ENCODE measurements at regions of chr11 and their contacts with region 1.

Region 1: GRCh38 chr11:65150509-65151271 is 16.4 kb upstream of the SYVN1 start:
- DNase-seq: peak; percentile 99 to 100
- H3K4me3 ChIP-seq: peak overlapping the region; percentile 18; the same call in 1 of the 2 replicates
- H3K27ac ChIP-seq: peak overlapping the region; percentile 88
- H3K4me1 ChIP-seq: peaks cover 40% of the 10 kb centered on the region
- H3K27me3 ChIP-seq: no peaks in the 10 kb centered on the region
- CTCF ChIP-seq: no peak; the same call in 1 of the 2 replicates

Region 2: GRCh38 chr11:64971421-64972233 is 179.1 kb before region 1 on chr11 and contains the start of gene MAJIN:
- CTCF ChIA-PET with region 1: interaction called, 12 read pairs
- POLR2A ChIA-PET with region 1: interaction called, 13 read pairs
- intact Hi-C with region 1: no loop called
- DNase-seq: peak; percentile 66 to 93
- H3K4me3 ChIP-seq: peak within 1 kb of the TSS; percentile 52; the same call in 1 of the 2 replicates
- H3K27ac ChIP-seq: peak within 1 kb of the TSS; percentile 95
- H3K4me1 ChIP-seq: peaks cover 26% of the 10 kb centered on the region
- H3K27me3 ChIP-seq: 0 out of 2 replicates have a peak, but pooled peaks cover under 1% of the 10 kb centered on the region
- CTCF ChIP-seq: no peak
- total RNA-seq, gene MAJIN: 4.5 and 7.1 TPM in 2 replicates

Region 3: GRCh38 chr11:65113361-65113756 is 37.3 kb before region 1 on chr11:
- CTCF ChIA-PET with region 1: no interaction called
- POLR2A ChIA-PET with region 1: no interaction called
- intact Hi-C with region 1: no loop called
- DNase-seq: peak in 1 of 2 experiments; percentile 19
- H3K4me3 ChIP-seq: peak overlapping the region; percentile 78; the same call in 1 of the 2 replicates
- H3K27ac ChIP-seq: no peak overlapping the region
- H3K4me1 ChIP-seq: peaks cover 40% of the 10 kb centered on the region
- H3K27me3 ChIP-seq: no peaks in the 10 kb centered on the region
- CTCF ChIP-seq: no peak

Region 4: GRCh38 chr11:65134386-65135253 is 16.1 kb before region 1 on chr11 and contains the start of gene SYVN1:
- CTCF ChIA-PET with region 1: interaction called, 5 read pairs
- POLR2A ChIA-PET with region 1: interaction called, 8 read pairs
- intact Hi-C with region 1: loop called (anchors 1 kb)
- DNase-seq: peak; percentile 95 to 99
- H3K4me3 ChIP-seq: peak within 1 kb of the TSS; percentile 92
- H3K27ac ChIP-seq: peak within 1 kb of the TSS; percentile 92
- H3K4me1 ChIP-seq: peaks cover 19% of the 10 kb centered on the region
- H3K27me3 ChIP-seq: no peaks in the 10 kb centered on the region
- CTCF ChIP-seq: no peak
- total RNA-seq, gene SYVN1: 40.9 and 51.5 TPM in 2 replicates

Region 5: DNA sequence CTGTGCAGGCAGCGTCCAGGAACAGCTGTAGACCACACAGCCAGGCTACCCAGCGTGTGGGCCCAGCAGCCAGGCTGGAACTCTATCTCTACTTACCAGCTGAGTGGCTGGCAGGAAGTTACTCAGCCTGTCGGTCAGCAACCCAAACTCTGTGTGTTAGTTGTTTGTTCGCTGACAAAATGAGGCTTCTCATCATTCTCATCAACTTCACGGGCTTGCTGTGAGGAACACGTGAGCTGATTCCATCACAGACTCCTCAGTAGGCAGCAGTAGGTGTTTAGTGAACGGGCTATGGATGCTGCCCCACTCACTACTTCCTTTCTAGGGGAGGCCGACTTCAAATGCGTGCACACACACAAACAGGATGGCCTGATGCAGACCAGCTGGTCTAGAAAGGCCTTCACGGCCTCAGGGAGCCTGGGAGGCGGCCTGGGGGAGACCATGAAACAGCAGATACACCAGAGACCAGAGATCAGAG is 18.5 kb after region 1 on chr11:
- CTCF ChIA-PET with region 1: no interaction called
- POLR2A ChIA-PET with region 1: interaction called, 10 read pairs
- intact Hi-C with region 1: no loop called
- DNase-seq: no peak
- H3K4me3 ChIP-seq: no peak overlapping the region
- H3K27ac ChIP-seq: no peak overlapping the region
- H3K4me1 ChIP-seq: no peaks in the 10 kb centered on the region; the same call in 1 of the 2 replicates
- H3K27me3 ChIP-seq: no peaks in the 10 kb centered on the region
- CTCF ChIP-seq: no peak

Measured in PC-9 (cell line).